H1 (cell line): ENCODE measurements at regions of chr1 and their contacts with region 1.

Region 1: DNA sequence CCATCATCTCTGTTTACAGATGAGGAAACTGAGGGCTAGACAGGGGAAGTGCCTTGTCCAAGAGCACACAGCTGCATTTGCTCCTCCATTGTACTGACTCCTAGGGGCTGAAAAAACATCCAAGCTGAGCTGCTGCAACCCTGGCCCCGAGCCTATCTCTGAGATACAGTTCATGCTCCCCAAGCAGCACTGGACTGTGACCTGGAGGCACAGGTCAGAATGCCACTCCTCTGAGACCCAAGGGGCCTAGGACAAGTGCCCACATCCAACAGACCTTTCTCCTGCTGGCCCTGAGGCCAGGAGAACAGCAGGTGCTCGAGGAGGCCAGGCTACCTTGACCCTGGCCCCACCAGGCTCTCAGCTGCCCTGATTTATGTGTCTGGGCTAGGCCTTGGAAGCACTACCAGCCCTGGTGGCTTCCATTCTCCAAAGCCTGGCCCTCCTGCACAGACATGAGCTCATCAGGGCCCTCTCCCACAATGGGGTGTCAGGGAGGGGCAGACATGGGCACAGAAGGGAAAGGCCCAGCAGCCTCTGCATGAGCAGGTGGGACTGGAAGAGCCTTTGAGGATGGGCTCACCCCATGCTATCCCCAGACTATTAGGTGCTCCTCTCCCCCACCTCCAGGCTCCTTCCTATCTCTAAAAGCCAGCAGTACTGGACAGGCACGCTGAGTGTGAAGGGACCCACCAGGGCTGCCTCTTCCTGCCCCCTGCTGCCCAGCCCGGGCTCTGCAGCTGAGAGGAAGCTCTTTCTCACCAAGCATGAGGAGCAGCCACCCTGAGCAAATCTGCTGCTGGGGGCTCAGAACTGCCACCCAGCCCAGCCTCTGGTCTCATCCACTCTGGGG is 18.8 kb downstream of the ADGRB2 start:
- DNase-seq: peak in 1 of 2 experiments; percentile 88
- H3K4me3 ChIP-seq: no peak overlapping the region
- H3K27ac ChIP-seq: no peak overlapping the region
- H3K4me1 ChIP-seq: peaks cover 0 to 8% (median 6%) of the 10 kb centered on the region in 4 experiments; a peak in 6 of 7 replicates
- H3K27me3 ChIP-seq: no peaks in the 10 kb centered on the region
- CTCF ChIP-seq: peak in 2 of 3 experiments; percentile 85 to 86; a peak in 3 of 4 replicates
- EP300 ChIP-seq: no peak
- POLR2A ChIP-seq: no peak
- RAD21 ChIP-seq: peak; percentile 68 to 82

Region 2: GRCh38 chr1:31663622-31664452 is 81.5 kb before region 1 on chr1:
- CTCF ChIA-PET with region 1: interaction called, 90 read pairs
- POLR2A ChIA-PET with region 1: interaction called, 6 read pairs
- DNase-seq: peak; percentile 25 to 98
- H3K4me3 ChIP-seq: no peak overlapping the region
- H3K27ac ChIP-seq: no peak overlapping the region
- H3K4me1 ChIP-seq: peaks cover 0 to 3% (median 0%) of the 10 kb centered on the region in 4 experiments; a peak in 3 of 7 replicates
- H3K27me3 ChIP-seq: no peaks in the 10 kb centered on the region
- CTCF ChIP-seq: peak in 2 of 3 experiments; percentile 93 to 96; a peak in 3 of 4 replicates
- EP300 ChIP-seq: no peak
- POLR2A ChIP-seq: no peak
- RAD21 ChIP-seq: peak; percentile 96 to 98

Region 3: DNA sequence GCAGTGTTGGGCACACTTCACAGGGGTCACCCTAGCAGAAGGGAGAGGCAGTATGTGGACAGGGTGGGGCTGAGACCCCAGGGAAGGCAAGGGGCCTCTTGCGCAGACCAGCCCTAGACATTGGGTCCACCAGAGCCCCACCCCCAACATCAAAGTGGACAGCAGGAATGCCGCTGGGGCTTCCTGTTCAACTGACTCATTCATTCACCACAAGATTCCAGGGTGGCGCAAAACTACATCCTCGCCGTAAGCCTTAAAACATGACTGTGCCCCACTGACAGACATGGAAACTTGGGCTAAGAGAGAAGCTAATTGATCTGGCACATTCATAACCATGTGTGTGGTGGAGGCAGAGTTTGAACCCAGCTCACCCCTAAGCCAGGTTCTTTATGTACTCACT is 55.5 kb before region 1 on chr1:
- CTCF ChIA-PET with region 1: interaction called, 10 read pairs
- POLR2A ChIA-PET with region 1: interaction called, 3 read pairs
- DNase-seq: no peak
- H3K4me3 ChIP-seq: no peak overlapping the region
- H3K27ac ChIP-seq: no peak overlapping the region
- H3K4me1 ChIP-seq: peaks cover 0 to 4% (median 0%) of the 10 kb centered on the region in 4 experiments; a peak in 3 of 7 replicates
- H3K27me3 ChIP-seq: no peaks in the 10 kb centered on the region
- CTCF ChIP-seq: no peak
- EP300 ChIP-seq: no peak
- POLR2A ChIP-seq: no peak
- RAD21 ChIP-seq: no peak

Region 4: DNA sequence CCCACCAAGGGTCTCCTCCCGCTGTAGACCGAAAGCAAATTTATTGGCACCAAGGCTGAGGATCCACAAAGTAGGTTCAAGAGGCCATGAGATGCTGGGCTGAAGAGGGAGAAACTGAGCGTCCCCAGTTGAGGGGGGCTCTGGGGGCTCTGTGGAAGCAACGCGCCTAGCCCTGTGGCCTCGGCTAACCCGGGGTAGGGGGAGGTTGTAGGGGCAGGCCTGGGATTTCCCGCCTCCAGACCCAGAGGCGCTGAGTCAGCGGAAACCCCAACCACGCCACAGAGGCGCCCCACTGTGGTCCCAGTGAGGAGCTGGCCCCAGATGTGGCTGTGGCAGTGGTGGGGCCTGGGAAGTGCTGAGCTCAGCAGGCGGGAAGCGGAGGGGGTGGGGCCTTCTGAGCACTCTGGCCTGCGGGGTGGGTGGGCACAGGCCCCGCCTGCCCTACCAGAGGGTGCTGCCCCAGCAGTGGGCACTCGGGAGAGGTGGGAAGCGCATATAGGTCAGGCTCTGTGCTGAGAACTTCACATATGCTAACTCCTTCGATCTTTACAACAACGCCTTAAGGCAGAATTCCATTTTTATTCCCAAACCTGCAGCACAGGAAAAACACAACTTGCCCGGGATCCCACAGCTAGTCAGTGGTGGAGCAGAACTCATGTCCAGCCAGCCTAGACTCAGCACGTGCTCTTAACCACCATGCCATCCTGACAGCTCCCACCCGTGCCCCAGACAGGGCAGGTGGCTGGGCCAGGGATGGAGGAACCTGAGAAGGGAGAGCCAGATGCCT is 40.0 kb before region 1 on chr1:
- CTCF ChIA-PET with region 1: interaction called, 33 read pairs
- POLR2A ChIA-PET with region 1: interaction called, 3 read pairs
- DNase-seq: peak in 1 of 2 experiments; percentile 80
- H3K4me3 ChIP-seq: peak overlapping the region in 3 of 4 experiments; percentile 15 to 69 (median 17); a peak in 5 of 8 replicates
- H3K27ac ChIP-seq: no peak overlapping the region; the same call in 1 of the 2 replicates
- H3K4me1 ChIP-seq: peaks cover 15 to 35% (median 16%) of the 10 kb centered on the region in 4 experiments
- H3K27me3 ChIP-seq: no peaks in the 10 kb centered on the region; a peak in 1 of 7 replicates
- CTCF ChIP-seq: peak in 2 of 3 experiments; percentile 6 to 24; a peak in 2 of 4 replicates
- EP300 ChIP-seq: no peak
- POLR2A ChIP-seq: no peak
- RAD21 ChIP-seq: peak; percentile 32 to 47; a peak in 3 of 4 replicates

Region 5: DNA sequence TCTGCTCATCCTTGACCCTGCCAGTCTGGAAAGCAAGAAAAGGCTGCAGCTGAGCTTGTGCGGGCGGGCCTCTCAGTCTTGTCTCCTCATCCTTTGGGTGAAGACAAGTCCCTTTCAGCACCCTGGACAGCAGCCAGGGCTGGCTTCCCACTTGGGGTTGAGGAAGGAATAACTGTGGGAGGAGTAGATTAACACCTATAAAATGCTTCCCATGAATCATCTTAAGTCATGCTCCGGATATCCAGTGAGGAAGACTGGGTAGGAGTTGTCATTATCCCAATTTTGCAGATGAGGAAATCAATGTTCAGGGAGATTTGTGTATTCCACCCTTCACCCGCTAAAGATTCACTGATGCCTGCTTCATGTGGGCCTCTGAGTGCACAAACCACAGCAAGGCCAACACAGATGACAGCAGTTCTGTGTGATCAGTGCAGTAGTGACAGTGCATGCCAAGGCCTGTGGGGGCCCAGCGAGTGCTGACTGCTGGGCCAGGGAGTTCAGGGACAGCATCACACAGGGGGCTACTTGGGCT is 21.4 kb before region 1 on chr1:
- CTCF ChIA-PET with region 1: interaction called, 130 read pairs
- POLR2A ChIA-PET with region 1: no interaction called
- DNase-seq: peak in 1 of 2 experiments; percentile 94
- H3K4me3 ChIP-seq: no peak overlapping the region
- H3K27ac ChIP-seq: 0 out of 2 replicates have a peak overlapping the region, but pooled peaks have one; percentile 9
- H3K4me1 ChIP-seq: peaks cover 0 to 5% (median 2%) of the 10 kb centered on the region in 4 experiments; a peak in 2 of 7 replicates
- H3K27me3 ChIP-seq: no peaks in the 10 kb centered on the region; a peak in 1 of 7 replicates
- CTCF ChIP-seq: no peak
- EP300 ChIP-seq: no peak
- POLR2A ChIP-seq: no peak
- RAD21 ChIP-seq: no peak

Region 6: GRCh38 chr1:31762726-31763670 is 17.7 kb after region 1 on chr1:
- CTCF ChIA-PET with region 1: interaction called, 79 read pairs
- POLR2A ChIA-PET with region 1: interaction called, 9 read pairs
- DNase-seq: peak in 1 of 2 experiments; percentile 94
- H3K4me3 ChIP-seq: peak overlapping the region; percentile 48 to 75 (median 62)
- H3K27ac ChIP-seq: no peak overlapping the region
- H3K4me1 ChIP-seq: peaks cover 24 to 55% (median 34%) of the 10 kb centered on the region in 4 experiments
- H3K27me3 ChIP-seq: peaks cover 3 to 16% (median 7%) of the 10 kb centered on the region in 4 experiments; a peak in 5 of 7 replicates
- CTCF ChIP-seq: peak in 2 of 3 experiments; percentile 72 to 90; a peak in 3 of 4 replicates
- EP300 ChIP-seq: peak in 1 of 2 experiments; percentile 77; a peak in 1 of 3 replicates
- POLR2A ChIP-seq: no peak
- RAD21 ChIP-seq: peak; percentile 55 to 81

Region 7: GRCh38 chr1:31778763-31779488 is 33.6 kb after region 1 on chr1:
- CTCF ChIA-PET with region 1: interaction called, 13 read pairs
- POLR2A ChIA-PET with region 1: interaction called, 3 read pairs
- DNase-seq: no peak
- H3K4me3 ChIP-seq: no peak overlapping the region
- H3K27ac ChIP-seq: no peak overlapping the region
- H3K4me1 ChIP-seq: peaks cover 0 to 21% (median 18%) of the 10 kb centered on the region in 4 experiments; a peak in 6 of 7 replicates
- H3K27me3 ChIP-seq: peaks cover 1 to 14% (median 9%) of the 10 kb centered on the region in 4 experiments
- CTCF ChIP-seq: no peak
- EP300 ChIP-seq: no peak
- POLR2A ChIP-seq: no peak
- RAD21 ChIP-seq: no peak